ENCODE measurements at regions of chr16 and their contacts with region 1.

Region 1: DNA sequence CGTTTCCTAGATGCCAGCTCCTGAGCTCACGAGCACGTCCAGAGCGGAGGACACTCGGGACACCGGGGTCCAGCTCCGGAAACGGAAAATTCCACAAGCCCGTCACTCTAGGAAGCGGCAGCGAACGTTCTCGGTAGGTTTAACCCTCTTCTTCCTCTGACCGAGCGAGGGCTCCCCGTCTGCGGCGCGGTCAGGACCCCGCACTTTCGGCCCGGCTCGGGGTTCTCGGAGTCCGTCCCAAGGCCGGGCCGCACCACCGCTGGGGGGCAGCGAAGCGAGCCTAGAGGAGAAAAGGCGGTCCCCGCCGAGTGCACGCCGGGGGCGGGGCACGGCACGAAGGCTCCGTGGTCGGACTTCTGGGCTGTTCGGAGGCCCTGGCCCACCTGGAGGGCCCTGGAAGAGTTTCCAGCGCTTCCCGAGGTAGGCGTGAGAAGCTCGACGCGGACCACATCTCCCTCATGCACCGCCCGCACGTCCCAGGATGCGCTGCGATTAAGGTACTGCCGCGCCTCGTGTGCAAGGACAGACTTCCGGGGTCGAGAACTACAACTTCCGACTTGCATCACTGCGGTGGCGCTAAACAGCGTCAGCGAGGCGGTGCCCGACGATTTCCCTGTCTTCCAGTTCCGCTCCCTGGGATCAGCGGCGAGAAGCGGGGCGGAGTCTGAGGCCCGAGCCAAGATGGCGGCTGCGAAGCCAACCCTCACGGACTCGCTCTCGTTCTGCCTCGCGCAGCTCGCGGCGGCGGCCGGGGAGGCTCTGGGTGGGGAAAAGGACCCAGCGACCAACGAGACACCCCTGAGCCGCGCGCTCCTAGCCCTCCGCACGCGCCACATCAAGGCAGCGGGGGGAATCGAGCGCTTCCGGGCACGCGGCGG is at the start of gene ARMC5:
- DNase-seq: peak; percentile 95
- ATAC-seq: peak; percentile 66
- H3K4me3 Mint-ChIP-seq: peak within 1 kb of the TSS; percentile 92
- H3K27ac Mint-ChIP-seq: peak within 1 kb of the TSS; percentile 97
- H3K4me1 Mint-ChIP-seq: peaks cover 38% of the 10 kb centered on the region
- H3K27me3 Mint-ChIP-seq: no peaks in the 10 kb centered on the region
- total RNA-seq, gene ARMC5: 12.9 to 13.6 TPM

Region 2: GRCh38 chr16:31073968-31074813 is 384.9 kb before region 1 on chr16 and contains the starts of genes ZNF646 and ZNF668:
- POLR2A ChIA-PET with region 1: interaction called, 14 read pairs
- DNase-seq: peak; percentile 94
- ATAC-seq: peak; percentile 78
- H3K4me3 Mint-ChIP-seq: peak within 1 kb of the TSS; percentile 97
- H3K27ac Mint-ChIP-seq: peak within 1 kb of the TSS; percentile 99
- H3K4me1 Mint-ChIP-seq: peaks cover 28% of the 10 kb centered on the region
- H3K27me3 Mint-ChIP-seq: no peaks in the 10 kb centered on the region
- total RNA-seq, gene ZNF646: 37.3 to 38.7 TPM
- total RNA-seq, gene ZNF668: 17.9 to 20.5 TPM

Region 3: GRCh38 chr16:31202414-31203375 is 256.4 kb before region 1 on chr16 and contains the start of gene PYCARD:
- POLR2A ChIA-PET with region 1: interaction called, 13 read pairs
- DNase-seq: peak; percentile 71
- ATAC-seq: peak; percentile 25
- H3K4me3 Mint-ChIP-seq: peak within 1 kb of the TSS; percentile 90
- H3K27ac Mint-ChIP-seq: peak within 1 kb of the TSS; percentile 86
- H3K4me1 Mint-ChIP-seq: peaks cover 50% of the 10 kb centered on the region
- H3K27me3 Mint-ChIP-seq: peaks cover 12% of the 10 kb centered on the region
- total RNA-seq, gene PYCARD: 82.3 to 87.0 TPM

Region 4: DNA sequence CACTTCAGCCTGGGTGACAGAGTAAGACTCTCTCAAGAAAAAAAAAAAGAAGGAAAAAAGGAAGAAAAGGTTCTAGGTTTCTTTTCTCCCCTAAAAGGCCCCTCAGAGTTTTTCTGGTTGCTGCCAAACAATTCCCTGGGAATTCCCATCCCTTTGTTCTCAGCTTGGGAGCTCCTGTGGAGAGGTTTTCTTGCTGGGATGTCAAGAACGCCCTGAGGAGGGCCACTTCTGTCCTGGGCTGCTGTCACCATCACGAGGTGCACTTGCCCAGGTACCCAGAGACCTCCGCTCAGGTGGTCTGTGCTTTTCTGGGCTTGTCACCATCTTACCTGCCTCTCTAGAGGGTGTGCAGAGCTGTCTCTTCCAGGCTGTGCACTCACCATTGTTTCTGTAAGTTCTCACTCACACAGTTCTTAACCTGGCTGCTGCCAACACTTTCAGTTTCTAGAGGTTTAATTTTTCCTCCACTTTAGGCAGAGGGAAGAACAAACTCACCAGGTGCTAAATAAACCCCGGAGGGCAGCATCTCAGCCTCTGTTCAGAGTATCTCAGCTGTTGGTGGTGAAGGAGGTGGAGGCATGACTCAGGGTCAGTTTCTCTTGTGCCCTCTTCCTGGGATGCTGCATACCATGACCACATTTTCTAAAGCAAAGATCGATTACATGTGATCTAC is 28.6 kb before region 1 on chr16:
- POLR2A ChIA-PET with region 1: no interaction called
- DNase-seq: no peak
- ATAC-seq: peak; percentile 77
- H3K4me3 Mint-ChIP-seq: peak overlapping the region; percentile 29
- H3K27ac Mint-ChIP-seq: peak overlapping the region; percentile 50
- H3K4me1 Mint-ChIP-seq: peaks cover 25% of the 10 kb centered on the region
- H3K27me3 Mint-ChIP-seq: peaks cover 5% of the 10 kb centered on the region

Region 5: GRCh38 chr16:31507929-31508705 is 49.0 kb after region 1 on chr16 and contains the start of gene RUSF1:
- POLR2A ChIA-PET with region 1: interaction called, 16 read pairs
- DNase-seq: peak; percentile 90
- ATAC-seq: peak; percentile 88
- H3K4me3 Mint-ChIP-seq: peak within 1 kb of the TSS; percentile 90
- H3K27ac Mint-ChIP-seq: peak within 1 kb of the TSS; percentile 95
- H3K4me1 Mint-ChIP-seq: peaks cover 36% of the 10 kb centered on the region
- H3K27me3 Mint-ChIP-seq: no peaks in the 10 kb centered on the region
- total RNA-seq, gene RUSF1: 53.9 to 60.2 TPM

Region 6: DNA sequence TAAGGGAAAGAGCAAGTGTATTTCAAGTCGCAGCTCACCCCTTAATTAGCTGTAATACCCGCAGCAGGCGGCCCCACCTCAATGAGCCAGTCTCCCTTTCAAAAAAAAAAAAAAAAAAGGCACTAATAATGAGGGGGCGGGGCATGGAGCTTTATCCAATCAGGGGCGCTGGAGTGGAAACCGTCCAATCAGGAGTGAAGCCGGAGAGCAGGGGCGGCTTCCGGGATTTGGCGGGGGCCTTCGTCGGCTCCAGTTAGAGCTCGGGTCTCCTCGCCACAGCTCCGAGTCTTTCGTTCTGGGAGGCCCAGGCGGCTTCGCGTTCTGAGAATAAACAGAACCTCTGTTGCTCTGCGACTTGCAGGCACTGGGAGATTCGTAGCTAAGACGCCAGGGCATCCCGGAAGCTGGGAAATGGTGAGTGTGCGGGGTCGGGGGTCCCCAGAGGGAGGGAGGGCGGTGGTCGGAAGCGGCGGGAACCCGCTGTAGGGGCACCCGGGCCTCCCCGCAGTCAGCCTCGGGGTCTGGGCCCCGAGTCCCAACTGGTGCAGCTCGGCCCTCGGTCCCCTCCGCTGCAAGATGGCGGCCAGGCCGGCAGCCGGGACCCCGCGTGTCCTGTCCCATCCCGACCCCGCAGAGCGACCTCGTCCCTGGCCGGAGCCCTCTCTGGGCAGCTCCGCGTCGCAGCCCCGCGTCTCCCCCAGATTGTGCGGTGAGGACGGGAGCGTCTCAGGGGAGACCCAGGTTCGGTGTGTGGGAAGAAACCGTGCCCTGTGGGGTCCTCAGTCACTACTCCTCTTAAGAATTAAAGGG is 414.7 kb after region 1 on chr16 and contains the start of gene ZNF267:
- POLR2A ChIA-PET with region 1: interaction called, 24 read pairs
- DNase-seq: peak; percentile 84
- ATAC-seq: peak; percentile 66
- H3K4me3 Mint-ChIP-seq: peak within 1 kb of the TSS; percentile 91
- H3K27ac Mint-ChIP-seq: peak within 1 kb of the TSS; percentile 97
- H3K4me1 Mint-ChIP-seq: peaks cover 63% of the 10 kb centered on the region
- H3K27me3 Mint-ChIP-seq: no peaks in the 10 kb centered on the region
- total RNA-seq, gene ZNF267: 60.9 to 62.6 TPM

Measured in activated naive CD8-positive, alpha-beta T cell treated with anti-CD3 and anti-CD28 coated beads, Interleukin-2, amount 10 ng/mL, durations not matched to agents 7 days and 5 days (primary cell).